Activated CD4-positive, alpha-beta T cell treated with anti-CD3 and anti-CD28 coated beads for 36 hours (primary cell): ENCODE measurements at regions of chr11 and their contacts with region 1.

Region 1: DNA sequence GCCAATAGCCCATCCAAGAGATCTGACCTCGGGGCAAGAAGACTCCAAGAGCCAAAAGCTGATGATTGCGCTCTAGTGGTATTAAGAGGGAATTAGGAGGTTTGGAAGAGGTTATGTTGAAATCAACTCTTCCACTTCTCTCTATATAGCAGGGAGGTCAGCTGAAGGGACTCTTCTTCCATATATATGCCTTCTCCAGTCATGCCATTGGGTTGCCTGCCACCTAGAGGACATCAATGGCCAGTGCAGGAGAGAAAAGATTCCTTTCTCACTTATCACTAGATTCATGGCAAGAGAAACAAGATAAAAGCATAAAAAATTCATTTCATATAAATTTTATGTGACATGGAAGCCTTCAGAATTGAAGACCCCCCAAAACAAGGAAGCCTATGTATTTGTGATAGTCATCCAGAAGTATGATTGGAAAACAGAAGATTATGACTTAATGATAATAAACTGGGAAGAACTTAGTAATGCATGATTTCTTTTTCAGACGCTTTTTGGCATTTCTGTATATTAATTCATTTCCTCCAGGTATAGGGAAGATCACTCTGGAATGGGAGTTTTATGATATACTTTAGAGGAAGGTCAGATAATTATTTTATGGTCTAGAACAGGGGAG is 435.1 kb upstream of the DDI1 start:
- DNase-seq: peak; percentile 49
- ATAC-seq: peak; percentile 63
- H3K4me3 Mint-ChIP-seq: no peak overlapping the region
- H3K27ac Mint-ChIP-seq: no peak overlapping the region
- H3K4me1 Mint-ChIP-seq: no peaks in the 10 kb centered on the region
- H3K27me3 Mint-ChIP-seq: peaks cover 16% of the 10 kb centered on the region

Region 2: DNA sequence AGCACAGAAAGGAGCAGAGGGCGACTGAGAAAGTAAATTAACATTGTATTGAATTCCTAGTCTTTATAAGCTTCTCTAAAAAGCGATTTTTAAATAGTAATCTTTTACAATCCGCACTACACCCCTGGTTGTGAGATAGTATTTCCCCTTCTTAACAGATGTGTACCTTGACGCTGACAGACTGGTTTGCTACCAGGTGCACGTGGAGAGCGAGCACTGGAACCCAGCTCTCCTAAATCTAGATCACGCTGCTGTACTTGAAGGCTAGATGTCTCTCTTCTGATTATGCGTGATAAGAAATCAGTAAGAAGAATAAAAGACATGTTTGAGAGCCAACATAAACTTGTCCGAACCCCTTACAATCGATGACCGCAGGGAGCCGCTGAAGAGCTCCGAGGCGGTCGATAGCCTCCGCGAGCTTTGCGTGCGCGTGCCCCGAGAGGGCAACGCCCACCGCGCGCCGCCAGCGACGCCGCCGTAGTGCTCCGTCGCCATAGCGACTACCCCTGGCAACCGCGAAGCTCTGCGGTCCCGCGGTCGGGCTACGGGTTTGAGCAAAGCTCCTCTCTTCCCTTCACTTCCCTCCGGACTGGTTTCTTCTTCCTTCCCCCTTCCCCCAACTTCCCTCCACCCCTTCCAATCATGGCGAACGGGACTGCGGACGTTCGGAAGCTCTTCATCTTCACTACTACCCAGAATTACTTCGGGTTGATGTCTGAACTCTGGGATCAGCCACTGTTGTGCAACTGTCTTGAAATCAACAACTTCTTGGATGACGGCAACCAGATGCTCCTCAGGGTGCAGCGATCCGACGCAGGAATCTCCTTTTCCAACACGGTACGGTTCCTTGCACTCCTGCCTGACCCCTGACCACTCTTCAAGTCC is 492.2 kb before region 1 on chr11 and contains the start of gene DYNC2H1:
- CTCF ChIA-PET with region 1: interaction called, 3 read pairs
- POLR2A ChIA-PET with region 1: no interaction called
- intact Hi-C with region 1: loop called in 1 of 2 experiments (anchors 5 kb)
- DNase-seq: peak; percentile 93
- ATAC-seq: peak; percentile 96
- H3K4me3 Mint-ChIP-seq: peak within 1 kb of the TSS; percentile 84
- H3K27ac Mint-ChIP-seq: peak within 1 kb of the TSS; percentile 68
- H3K4me1 Mint-ChIP-seq: peaks cover 11% of the 10 kb centered on the region
- H3K27me3 Mint-ChIP-seq: peaks cover 5% of the 10 kb centered on the region
- total RNA-seq, gene DYNC2H1: 1.4 to 1.9 TPM

Region 3: DNA sequence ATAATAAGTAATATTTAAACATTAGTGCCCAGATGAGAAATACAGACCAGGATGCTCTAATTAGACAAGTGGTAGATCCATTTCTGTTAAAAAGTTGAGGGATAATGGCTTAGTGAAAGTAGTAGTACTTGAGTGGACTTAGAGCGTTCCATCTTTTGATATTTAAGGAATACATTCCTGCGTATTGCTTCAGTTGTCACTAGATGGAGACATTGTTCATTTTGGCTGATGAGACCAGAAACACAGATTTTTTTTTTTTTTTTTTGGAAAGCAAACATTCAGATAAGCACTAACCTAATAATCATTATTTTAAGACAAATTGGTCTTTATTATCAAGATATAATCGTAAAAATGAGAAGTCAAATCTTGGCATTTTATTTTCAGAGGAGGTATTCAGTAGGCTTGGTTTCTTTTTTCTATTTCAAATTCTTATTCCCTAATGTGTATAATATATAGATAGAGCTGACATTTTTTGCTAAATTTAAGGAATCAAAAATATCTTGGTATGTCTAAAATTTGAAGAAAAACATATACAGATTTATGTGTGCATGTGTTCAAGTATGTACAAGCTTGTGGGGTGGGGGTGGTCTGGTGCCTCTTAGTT is 399.2 kb before region 1 on chr11:
- CTCF ChIA-PET with region 1: no interaction called
- POLR2A ChIA-PET with region 1: no interaction called
- intact Hi-C with region 1: loop called in 1 of 2 experiments (anchors 1 kb)
- DNase-seq: no peak
- ATAC-seq: no peak
- H3K4me3 Mint-ChIP-seq: no peak overlapping the region
- H3K27ac Mint-ChIP-seq: no peak overlapping the region
- H3K4me1 Mint-ChIP-seq: no peaks in the 10 kb centered on the region
- H3K27me3 Mint-ChIP-seq: no peaks in the 10 kb centered on the region

Region 4: GRCh38 chr11:103257360-103257759 is 344.0 kb before region 1 on chr11:
- CTCF ChIA-PET with region 1: no interaction called
- POLR2A ChIA-PET with region 1: no interaction called
- intact Hi-C with region 1: loop called in 1 of 2 experiments (anchors 5 kb)
- DNase-seq: no peak
- ATAC-seq: no peak
- H3K4me3 Mint-ChIP-seq: no peak overlapping the region
- H3K27ac Mint-ChIP-seq: no peak overlapping the region
- H3K4me1 Mint-ChIP-seq: no peaks in the 10 kb centered on the region
- H3K27me3 Mint-ChIP-seq: no peaks in the 10 kb centered on the region

Region 5: GRCh38 chr11:103326070-103326794 is 275.1 kb before region 1 on chr11:
- CTCF ChIA-PET with region 1: interaction called, 3 read pairs
- POLR2A ChIA-PET with region 1: no interaction called
- intact Hi-C with region 1: loop called (anchors 1 kb)
- DNase-seq: peak; percentile 27
- ATAC-seq: peak; percentile 74
- H3K4me3 Mint-ChIP-seq: no peak overlapping the region
- H3K27ac Mint-ChIP-seq: no peak overlapping the region
- H3K4me1 Mint-ChIP-seq: peaks cover 4% of the 10 kb centered on the region
- H3K27me3 Mint-ChIP-seq: no peaks in the 10 kb centered on the region